ENCODE measurements at regions of chr6 and their contacts with region 1.

Region 1: DNA sequence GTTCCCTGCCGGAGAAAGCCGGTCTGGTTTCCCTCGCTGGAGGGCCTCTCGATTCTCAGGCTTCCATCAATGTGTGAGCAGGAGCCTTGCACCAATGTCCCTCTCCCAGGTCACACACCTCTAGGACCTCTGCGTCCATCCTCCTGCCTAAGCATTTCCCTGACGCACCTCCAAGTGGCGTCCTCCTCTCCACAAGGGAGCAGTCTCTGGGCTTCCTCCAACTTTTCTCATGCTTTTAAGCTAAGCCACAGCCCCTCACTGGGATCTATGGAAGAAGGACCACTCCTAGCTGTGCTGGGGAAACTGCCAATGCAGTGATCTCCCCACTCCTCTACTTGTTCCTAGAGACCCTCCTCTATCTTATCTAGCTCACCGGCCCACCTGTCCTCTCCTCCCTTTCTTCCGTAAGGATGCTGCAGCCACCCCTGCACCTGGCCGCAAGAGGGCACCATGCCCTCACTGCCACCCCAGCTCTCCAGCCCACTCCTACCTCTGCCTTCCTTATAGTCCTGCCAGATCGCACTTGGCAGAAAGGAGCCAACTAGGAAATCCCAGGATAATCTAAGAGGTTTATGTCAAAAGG is 258.7 kb downstream of the LRFN2 start:
- DNase-seq: peak; percentile 42
- H3K4me3 Mint-ChIP-seq: no peak overlapping the region
- H3K27ac Mint-ChIP-seq: peak overlapping the region; percentile 33
- H3K4me1 Mint-ChIP-seq: peaks cover 44% of the 10 kb centered on the region
- H3K27me3 Mint-ChIP-seq: peaks cover 10% of the 10 kb centered on the region

Region 2: GRCh38 chr6:40138273-40138720 is 190.2 kb before region 1 on chr6:
- intact Hi-C with region 1: no loop called
- DNase-seq: no peak
- H3K4me3 Mint-ChIP-seq: no peak overlapping the region
- H3K27ac Mint-ChIP-seq: no peak overlapping the region
- H3K4me1 Mint-ChIP-seq: no peaks in the 10 kb centered on the region
- H3K27me3 Mint-ChIP-seq: no peaks in the 10 kb centered on the region

Region 3: GRCh38 chr6:40362859-40363258 is 34.4 kb after region 1 on chr6:
- intact Hi-C with region 1: no loop called
- DNase-seq: no peak
- H3K4me3 Mint-ChIP-seq: no peak overlapping the region
- H3K27ac Mint-ChIP-seq: no peak overlapping the region
- H3K4me1 Mint-ChIP-seq: peaks cover 6% of the 10 kb centered on the region
- H3K27me3 Mint-ChIP-seq: peaks cover 20% of the 10 kb centered on the region

Region 4: GRCh38 chr6:40436685-40437604 is 108.4 kb after region 1 on chr6:
- intact Hi-C with region 1: loop called (anchors 5 kb)
- DNase-seq: peak; percentile 49
- H3K4me3 Mint-ChIP-seq: peak overlapping the region; percentile 35
- H3K27ac Mint-ChIP-seq: peak overlapping the region; percentile 60
- H3K4me1 Mint-ChIP-seq: peaks cover 27% of the 10 kb centered on the region
- H3K27me3 Mint-ChIP-seq: peaks cover 8% of the 10 kb centered on the region

Region 5: GRCh38 chr6:40587240-40588069 is 259.0 kb after region 1 on chr6 and contains the start of gene LRFN2:
- intact Hi-C with region 1: loop called (anchors 1 kb)
- DNase-seq: peak; percentile 71
- H3K4me3 Mint-ChIP-seq: peak within 1 kb of the TSS; percentile 86
- H3K27ac Mint-ChIP-seq: peak within 1 kb of the TSS; percentile 59
- H3K4me1 Mint-ChIP-seq: peaks cover 24% of the 10 kb centered on the region
- H3K27me3 Mint-ChIP-seq: peaks cover 49% of the 10 kb centered on the region
- total RNA-seq, gene LRFN2: 0.29 TPM in 2 replicates

Region 6: GRCh38 chr6:40779409-40779808 is 450.9 kb after region 1 on chr6:
- intact Hi-C with region 1: no loop called
- DNase-seq: no peak
- H3K4me3 Mint-ChIP-seq: no peak overlapping the region
- H3K27ac Mint-ChIP-seq: no peak overlapping the region
- H3K4me1 Mint-ChIP-seq: no peaks in the 10 kb centered on the region
- H3K27me3 Mint-ChIP-seq: peaks cover 2% of the 10 kb centered on the region

Region 7: GRCh38 chr6:40912158-40912946 is 583.9 kb after region 1 on chr6:
- intact Hi-C with region 1: loop called (anchors 10 kb)
- DNase-seq: peak; percentile 11
- H3K4me3 Mint-ChIP-seq: no peak overlapping the region
- H3K27ac Mint-ChIP-seq: no peak overlapping the region
- H3K4me1 Mint-ChIP-seq: peaks cover 6% of the 10 kb centered on the region
- H3K27me3 Mint-ChIP-seq: peaks cover 4% of the 10 kb centered on the region